Activated CD4-positive, alpha-beta T cell treated with anti-CD3 and anti-CD28 coated beads for 36 hours (primary cell): ENCODE measurements at regions of chr15 and their contacts with region 1.

Region 1: GRCh38 chr15:38563723-38564519 is 693 bp downstream of the RASGRP1 start:
- DNase-seq: peak; percentile 93
- ATAC-seq: peak; percentile 55
- H3K4me3 Mint-ChIP-seq: peak overlapping the region; percentile 93
- H3K27ac Mint-ChIP-seq: peak overlapping the region; percentile 98
- H3K4me1 Mint-ChIP-seq: peaks cover 54% of the 10 kb centered on the region
- H3K27me3 Mint-ChIP-seq: no peaks in the 10 kb centered on the region

Region 2: GRCh38 chr15:37783290-37783689 is 780.6 kb before region 1 on chr15:
- CTCF ChIA-PET with region 1: no interaction called
- POLR2A ChIA-PET with region 1: no interaction called
- intact Hi-C with region 1: no loop called
- DNase-seq: no peak
- ATAC-seq: no peak
- H3K4me3 Mint-ChIP-seq: no peak overlapping the region
- H3K27ac Mint-ChIP-seq: no peak overlapping the region
- H3K4me1 Mint-ChIP-seq: no peaks in the 10 kb centered on the region
- H3K27me3 Mint-ChIP-seq: peaks cover 2% of the 10 kb centered on the region

Region 3: GRCh38 chr15:38453971-38454695 is 109.8 kb before region 1 on chr15 and contains the start of gene FAM98B:
- CTCF ChIA-PET with region 1: interaction called, 6 read pairs
- POLR2A ChIA-PET with region 1: interaction called, 3 read pairs
- intact Hi-C with region 1: loop called in 1 of 2 experiments (anchors 2 kb)
- DNase-seq: peak; percentile 92
- ATAC-seq: peak; percentile 92
- H3K4me3 Mint-ChIP-seq: peak within 1 kb of the TSS; percentile 78
- H3K27ac Mint-ChIP-seq: peak within 1 kb of the TSS; percentile 93
- H3K4me1 Mint-ChIP-seq: peaks cover 31% of the 10 kb centered on the region
- H3K27me3 Mint-ChIP-seq: no peaks in the 10 kb centered on the region
- total RNA-seq, gene FAM98B: 54.2 to 81.9 TPM

Region 4: GRCh38 chr15:38536201-38536676 is 27.7 kb before region 1 on chr15:
- CTCF ChIA-PET with region 1: interaction called, 6 read pairs
- POLR2A ChIA-PET with region 1: interaction called, 4 read pairs
- intact Hi-C with region 1: loop called in 1 of 2 experiments (anchors 1 kb)
- DNase-seq: no peak
- ATAC-seq: no peak
- H3K4me3 Mint-ChIP-seq: no peak overlapping the region
- H3K27ac Mint-ChIP-seq: peak overlapping the region; percentile 26
- H3K4me1 Mint-ChIP-seq: peaks cover 98% of the 10 kb centered on the region
- H3K27me3 Mint-ChIP-seq: no peaks in the 10 kb centered on the region

Region 5: GRCh38 chr15:38610748-38611147 is 46.8 kb after region 1 on chr15:
- CTCF ChIA-PET with region 1: interaction called, 145 read pairs
- POLR2A ChIA-PET with region 1: interaction called, 194 read pairs
- intact Hi-C with region 1: loop called (anchors 1 kb)
- DNase-seq: peak; percentile 78
- ATAC-seq: peak; percentile 52
- H3K4me3 Mint-ChIP-seq: peak overlapping the region; percentile 42
- H3K27ac Mint-ChIP-seq: peak overlapping the region; percentile 96
- H3K4me1 Mint-ChIP-seq: peaks cover 81% of the 10 kb centered on the region
- H3K27me3 Mint-ChIP-seq: no peaks in the 10 kb centered on the region

Region 6: DNA sequence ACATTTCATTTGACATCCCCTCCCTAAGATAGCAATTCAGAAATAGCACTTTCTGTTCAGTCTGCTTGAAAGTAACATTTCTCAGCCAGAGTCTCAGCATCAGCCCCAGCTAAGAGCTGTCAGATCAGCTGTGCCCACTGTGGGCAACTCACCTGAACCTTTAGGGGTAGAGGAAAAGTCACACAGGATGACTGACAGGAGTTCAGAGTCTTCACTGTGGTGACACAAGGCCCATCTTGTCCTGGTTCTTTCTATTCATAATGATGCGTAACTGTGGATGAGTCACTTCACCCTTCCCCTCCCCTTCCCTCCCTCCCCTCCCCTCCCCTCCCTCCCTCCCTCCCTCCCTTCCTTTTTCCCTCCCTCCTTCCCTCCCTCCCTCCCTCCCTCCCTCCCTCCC is 96.8 kb after region 1 on chr15:
- CTCF ChIA-PET with region 1: interaction called, 46 read pairs
- POLR2A ChIA-PET with region 1: no interaction called
- intact Hi-C with region 1: loop called in 1 of 2 experiments (anchors 2 kb)
- DNase-seq: peak; percentile 60
- ATAC-seq: peak; percentile 77
- H3K4me3 Mint-ChIP-seq: peak overlapping the region; percentile 66
- H3K27ac Mint-ChIP-seq: peak overlapping the region; percentile 97
- H3K4me1 Mint-ChIP-seq: peaks cover 81% of the 10 kb centered on the region
- H3K27me3 Mint-ChIP-seq: no peaks in the 10 kb centered on the region

Region 7: GRCh38 chr15:38699633-38700230 is 135.8 kb after region 1 on chr15:
- CTCF ChIA-PET with region 1: interaction called, 14 read pairs
- POLR2A ChIA-PET with region 1: interaction called, 9 read pairs
- intact Hi-C with region 1: no loop called
- DNase-seq: peak; percentile 83
- ATAC-seq: peak; percentile 51
- H3K4me3 Mint-ChIP-seq: no peak overlapping the region
- H3K27ac Mint-ChIP-seq: peak overlapping the region; percentile 67
- H3K4me1 Mint-ChIP-seq: peaks cover 53% of the 10 kb centered on the region
- H3K27me3 Mint-ChIP-seq: no peaks in the 10 kb centered on the region